Dendritic cell treated with granulocyte-macrophage colony-stimulating factor and Interleukin-4, amounts not matched to agents 40 ng/mL and 50 ng/mL, for 4 days (primary cell): ENCODE measurements at regions of chr3 and their contacts with region 1.

Region 1: GRCh38 chr3:138371070-138371965 is 22.9 kb downstream of the MRAS start:
- H3K4me3 Mint-ChIP-seq: peak overlapping the region; percentile 27
- H3K27ac Mint-ChIP-seq: peak overlapping the region; percentile 79
- H3K4me1 Mint-ChIP-seq: peaks cover 75% of the 10 kb centered on the region
- H3K27me3 Mint-ChIP-seq: no peaks in the 10 kb centered on the region

Region 2: DNA sequence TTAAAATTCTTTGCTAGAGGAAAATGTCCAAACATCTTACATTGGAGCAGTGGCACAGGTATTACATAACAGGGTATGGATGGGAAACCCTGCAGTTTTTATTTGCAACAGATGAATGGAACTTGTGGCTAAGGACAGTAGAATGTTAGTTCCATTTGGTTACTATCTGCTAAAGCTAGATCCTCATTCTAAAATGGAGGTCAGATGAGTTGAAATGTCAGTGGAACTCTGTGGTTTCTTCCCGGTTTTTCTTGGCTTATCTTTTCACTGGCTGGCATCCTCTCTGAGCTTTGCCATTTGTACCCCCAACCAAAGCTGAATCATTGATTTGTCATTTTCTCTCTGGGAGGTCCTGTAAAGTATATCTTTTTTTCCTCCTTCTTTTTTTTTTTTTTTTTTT is 115.3 kb before region 1 on chr3:
- intact Hi-C with region 1: no loop called
- H3K4me3 Mint-ChIP-seq: no peak overlapping the region
- H3K27ac Mint-ChIP-seq: no peak overlapping the region
- H3K4me1 Mint-ChIP-seq: no peaks in the 10 kb centered on the region
- H3K27me3 Mint-ChIP-seq: no peaks in the 10 kb centered on the region

Region 3: DNA sequence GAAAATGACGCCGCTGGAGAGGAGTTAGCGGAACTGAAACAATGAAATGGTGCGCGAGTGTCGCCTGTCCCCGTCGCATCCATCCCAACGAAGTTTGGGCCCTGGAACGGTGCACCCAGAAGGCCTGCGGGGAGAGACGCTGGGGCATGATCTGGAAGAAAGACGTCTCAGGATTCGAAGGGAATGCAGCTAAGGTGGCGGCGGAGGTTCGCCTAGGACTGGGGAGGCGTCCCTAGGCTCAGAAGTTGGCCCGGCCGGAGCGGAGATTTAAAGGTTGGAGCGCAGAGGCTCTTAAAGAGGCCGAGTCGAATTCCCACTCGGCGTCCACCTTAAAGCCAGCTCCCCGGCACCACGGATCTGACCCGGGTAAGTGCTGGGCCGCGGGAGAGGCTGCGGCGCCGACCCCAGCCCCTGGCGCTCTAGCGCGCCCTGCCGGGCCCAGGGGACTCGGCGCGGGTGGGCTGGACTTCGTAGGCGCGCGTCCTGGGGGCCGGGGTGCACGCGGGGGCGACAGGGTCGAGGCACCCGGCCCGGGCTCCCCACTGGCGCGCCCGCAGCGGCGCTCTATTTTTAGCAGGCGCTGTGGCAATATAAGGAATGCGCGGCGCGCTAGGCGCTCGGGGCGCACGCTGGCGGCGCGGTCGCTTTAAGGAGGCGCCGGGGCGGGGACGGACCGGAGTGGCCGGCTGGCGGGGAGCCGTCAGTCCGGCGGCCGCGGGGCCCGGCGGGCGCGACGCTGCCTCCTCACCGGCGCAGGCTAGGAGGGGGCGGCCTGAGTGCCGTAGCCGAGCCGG is 23.2 kb before region 1 on chr3 and contains the start of gene MRAS:
- intact Hi-C with region 1: loop called (anchors 2 kb)
- H3K4me3 Mint-ChIP-seq: peak within 1 kb of the TSS; percentile 100
- H3K27ac Mint-ChIP-seq: peak within 1 kb of the TSS; percentile 99
- H3K4me1 Mint-ChIP-seq: peaks cover 46% of the 10 kb centered on the region
- H3K27me3 Mint-ChIP-seq: peaks cover 7% of the 10 kb centered on the region

Region 4: DNA sequence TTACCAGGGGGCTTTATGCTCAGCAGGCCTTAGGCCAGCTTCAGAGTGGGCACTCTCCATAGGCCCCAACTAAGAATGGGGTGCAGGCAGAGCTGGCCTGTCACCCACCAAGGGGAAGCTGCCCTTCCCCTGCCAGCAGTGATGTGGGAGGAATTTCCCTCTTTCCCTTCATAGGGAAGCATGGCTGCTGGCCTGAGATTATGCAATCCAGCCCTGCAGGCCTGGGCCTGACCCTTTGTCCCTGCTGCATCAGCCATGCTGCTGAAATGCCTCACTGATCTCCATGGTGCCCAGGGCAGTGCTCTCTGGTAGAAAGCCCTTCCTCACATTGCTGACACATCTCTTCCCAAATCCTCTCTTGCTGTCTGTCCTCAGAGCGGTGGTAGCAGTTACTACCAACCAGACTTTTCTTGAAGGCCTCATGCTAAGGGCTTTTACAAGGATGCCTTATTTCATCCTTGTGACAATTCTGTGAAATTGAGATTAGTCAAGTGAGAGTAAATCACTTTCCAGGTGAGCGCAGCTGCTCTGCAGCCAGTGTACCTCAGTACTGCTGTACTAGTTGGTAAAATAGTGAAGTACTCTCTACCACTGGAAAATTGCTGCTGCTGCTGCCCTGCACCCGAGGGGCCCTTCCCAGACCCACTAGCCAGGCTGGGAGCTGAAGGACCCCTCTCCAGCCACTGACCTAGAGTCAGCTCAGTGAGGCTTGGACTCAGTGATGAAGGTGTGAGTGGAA is 10.8 kb after region 1 on chr3:
- intact Hi-C with region 1: loop called (anchors 1 kb)
- H3K4me3 Mint-ChIP-seq: no peak overlapping the region
- H3K27ac Mint-ChIP-seq: peak overlapping the region; percentile 84
- H3K4me1 Mint-ChIP-seq: peaks cover 75% of the 10 kb centered on the region
- H3K27me3 Mint-ChIP-seq: no peaks in the 10 kb centered on the region

Region 5: GRCh38 chr3:138412821-138413551 is 41.7 kb after region 1 on chr3:
- intact Hi-C with region 1: loop called (anchors 1 kb)
- H3K4me3 Mint-ChIP-seq: peak overlapping the region; percentile 44
- H3K27ac Mint-ChIP-seq: peak overlapping the region; percentile 98
- H3K4me1 Mint-ChIP-seq: peaks cover 82% of the 10 kb centered on the region
- H3K27me3 Mint-ChIP-seq: peaks cover 4% of the 10 kb centered on the region